Mucosa of descending colon (tissue), 3 donors: ENCODE measurements at regions of chr1 and their contacts with region 1.

Region 1: GRCh38 chr1:156090822-156091188 is 8.5 kb upstream of the MEX3A start:
- DNase-seq: peak; percentile 87 to 92 (median 92)
- ATAC-seq: peak; percentile 92
- H3K4me3 ChIP-seq: no peak overlapping the region
- H3K4me1 ChIP-seq: peaks cover 3% of the 10 kb centered on the region
- CTCF ChIP-seq: peak; percentile 45

Region 2: GRCh38 chr1:155713075-155713474 is 377.7 kb before region 1 on chr1:
- intact Hi-C with region 1: no loop called
- DNase-seq: no peak
- ATAC-seq: no peak
- H3K4me3 ChIP-seq: no peak overlapping the region
- H3K4me1 ChIP-seq: peaks cover 3% of the 10 kb centered on the region
- CTCF ChIP-seq: no peak

Region 3: GRCh38 chr1:156136970-156137483 is 46.2 kb after region 1 on chr1:
- intact Hi-C with region 1: loop called (anchors 5 kb)
- DNase-seq: no peak
- ATAC-seq: no peak
- H3K4me3 ChIP-seq: no peak overlapping the region
- H3K4me1 ChIP-seq: no peaks in the 10 kb centered on the region
- CTCF ChIP-seq: no peak